ENCODE measurements at regions of chr10 and their contacts with region 1.

Region 1: GRCh38 chr10:11525503-11525902 is 85.9 kb downstream of the USP6NL start:
- DNase-seq: peak; percentile 37
- H3K4me3 ChIP-seq: no peak overlapping the region
- H3K27ac ChIP-seq: no peak overlapping the region
- H3K4me1 ChIP-seq: no peaks in the 10 kb centered on the region
- H3K27me3 ChIP-seq: no peaks in the 10 kb centered on the region
- CTCF ChIP-seq: no peak

Region 2: GRCh38 chr10:10722422-10722821 is 803.1 kb before region 1 on chr10:
- intact Hi-C with region 1: no loop called
- DNase-seq: no peak
- H3K4me3 ChIP-seq: no peak overlapping the region
- H3K27ac ChIP-seq: no peak overlapping the region
- H3K4me1 ChIP-seq: no peaks in the 10 kb centered on the region
- H3K27me3 ChIP-seq: no peaks in the 10 kb centered on the region
- CTCF ChIP-seq: no peak

Region 3: DNA sequence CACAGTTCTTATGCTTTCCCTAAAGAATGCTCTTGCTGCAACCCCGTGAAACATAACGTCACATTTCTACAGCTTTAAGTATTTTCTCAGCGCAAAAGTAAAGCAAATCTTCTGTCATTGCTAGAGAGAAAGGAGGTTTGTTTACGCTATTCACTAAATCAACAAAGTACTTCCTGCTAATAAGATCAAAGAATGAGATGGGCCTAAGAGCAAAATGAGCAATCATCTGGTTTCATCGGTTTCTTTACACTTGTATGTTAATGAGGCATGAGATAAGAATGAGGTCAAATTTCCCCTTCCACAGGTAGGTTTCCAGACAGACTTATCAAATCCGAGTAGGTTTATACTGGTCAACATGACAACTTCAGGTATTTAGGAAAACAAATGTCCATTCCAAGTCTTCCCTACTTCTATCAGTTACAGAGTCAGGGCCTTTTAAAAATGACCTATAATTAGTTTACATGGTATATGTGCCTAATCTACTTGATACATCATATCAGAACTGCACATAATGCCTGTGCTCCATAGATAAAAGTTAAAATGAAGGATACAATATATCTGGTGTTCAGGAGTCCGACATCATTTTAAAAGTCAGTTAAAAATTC is 77.5 kb after region 1 on chr10:
- intact Hi-C with region 1: loop called (anchors 10 kb)
- DNase-seq: no peak
- H3K4me3 ChIP-seq: no peak overlapping the region
- H3K27ac ChIP-seq: no peak overlapping the region
- H3K4me1 ChIP-seq: no peaks in the 10 kb centered on the region
- H3K27me3 ChIP-seq: no peaks in the 10 kb centered on the region
- CTCF ChIP-seq: no peak